GM10248 (cell line): ENCODE measurements at regions of chr22 and their contacts with region 1.

Region 1: GRCh38 chr22:36258701-36259614 is 6.0 kb downstream of the APOL1 start:
- DNase-seq: peak; percentile 56
- CTCF ChIP-seq: no peak

Region 2: GRCh38 chr22:36481393-36482168 is 222.6 kb after region 1 on chr22 and contains the start of gene TXN2:
- CTCF ChIA-PET with region 1: no interaction called
- POLR2A ChIA-PET with region 1: no interaction called
- DNase-seq: peak; percentile 97
- CTCF ChIP-seq: no peak

Region 3: GRCh38 chr22:36734171-36735058 is 475.5 kb after region 1 on chr22:
- CTCF ChIA-PET with region 1: no interaction called
- POLR2A ChIA-PET with region 1: interaction called, 11 read pairs
- DNase-seq: peak; percentile 67
- CTCF ChIP-seq: no peak